ENCODE measurements at regions of chr1 and their contacts with region 1.

Region 1: DNA sequence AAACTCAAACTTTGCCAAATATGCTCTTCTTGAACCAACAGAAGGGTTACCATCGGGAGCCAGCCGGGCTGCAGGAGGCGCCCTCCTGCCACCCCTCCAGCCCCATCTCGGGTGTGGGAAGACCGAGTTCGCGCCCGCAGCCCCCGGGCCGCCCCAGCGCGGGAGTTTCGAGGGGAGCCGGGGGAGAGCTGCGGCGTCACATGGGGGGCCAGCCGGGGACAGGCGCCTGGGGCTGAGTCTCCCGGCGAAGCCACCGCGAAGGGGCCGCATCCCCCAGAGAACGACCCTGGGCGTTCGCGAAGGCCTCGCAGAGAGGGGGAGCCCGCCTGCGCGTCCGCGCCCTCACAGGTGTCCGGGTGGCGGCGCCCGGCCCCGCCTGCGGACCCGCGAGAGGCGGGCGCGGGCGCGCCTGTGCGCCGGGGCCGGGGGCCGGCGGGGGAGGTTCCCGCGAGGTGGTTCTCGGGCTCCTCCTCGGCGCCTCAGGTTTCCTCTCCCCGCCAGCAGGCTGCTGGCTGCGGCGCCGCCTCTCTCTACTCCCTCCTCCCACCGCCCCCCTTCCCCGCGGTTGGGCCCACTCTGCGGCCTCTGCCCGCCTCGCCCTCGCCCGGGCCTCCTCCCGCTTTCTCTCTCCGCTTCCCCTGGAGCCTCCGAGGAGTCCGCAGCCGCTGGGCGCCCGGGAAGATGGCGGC is at the start of gene RAVER2:
- DNase-seq: peak; percentile 49
- ATAC-seq: peak; percentile 91
- H3K4me3 ChIP-seq: peak within 1 kb of the TSS; percentile 68
- H3K27ac ChIP-seq: peak within 1 kb of the TSS; percentile 12; the same call in 1 of the 2 replicates
- H3K4me1 ChIP-seq: no peaks in the 10 kb centered on the region
- H3K27me3 ChIP-seq: no peaks in the 10 kb centered on the region
- CTCF ChIP-seq: no peak; the same call in 1 of the 2 replicates
- POLR2A ChIP-seq: no peak
- RAD21 ChIP-seq: no peak
- total RNA-seq, gene RAVER2: 6.1 and 6.7 TPM in 2 replicates

Region 2: GRCh38 chr1:64686828-64687724 is 57.6 kb before region 1 on chr1:
- CTCF ChIA-PET with region 1: interaction called, 3 read pairs
- POLR2A ChIA-PET with region 1: no interaction called
- dilution Hi-C with region 1: no loop called
- in situ Hi-C with region 1: no loop called
- intact Hi-C with region 1: loop called (anchors 1 kb)
- DNase-seq: peak; percentile 65
- ATAC-seq: peak; percentile 87
- H3K4me3 ChIP-seq: no peak overlapping the region
- H3K27ac ChIP-seq: no peak overlapping the region
- H3K4me1 ChIP-seq: peaks cover 12% of the 10 kb centered on the region
- H3K27me3 ChIP-seq: no peaks in the 10 kb centered on the region
- CTCF ChIP-seq: peak; percentile 84
- POLR2A ChIP-seq: no peak
- RAD21 ChIP-seq: peak; percentile 69